ENCODE measurements at regions of chr10 and their contacts with region 1.

Region 1: GRCh38 chr10:122368502-122369256 is 5.8 kb upstream of the PLEKHA1 start:
- DNase-seq: no peak
- H3K4me3 ChIP-seq: no peak overlapping the region
- H3K4me3 Mint-ChIP-seq: peak overlapping the region in 1 of 7 donors; percentile 21
- H3K27ac ChIP-seq: no peak overlapping the region
- H3K27ac Mint-ChIP-seq: no peak overlapping the region
- H3K4me1 ChIP-seq: peaks cover 3% of the 10 kb centered on the region
- H3K4me1 Mint-ChIP-seq: peaks cover 3 to 6% (median 3%) of the 10 kb centered on the region in 3 donors
- H3K27me3 ChIP-seq: no peaks in the 10 kb centered on the region
- H3K27me3 Mint-ChIP-seq: peaks cover 16 to 46% of the 10 kb centered on the region in 2 donors

Region 2: GRCh38 chr10:122258136-122259074 is 110.3 kb before region 1 on chr10:
- CTCF ChIA-PET with region 1: no interaction called
- POLR2A ChIA-PET with region 1: no interaction called
- DNase-seq: no peak
- H3K4me3 ChIP-seq: no peak overlapping the region
- H3K4me3 Mint-ChIP-seq: no peak overlapping the region
- H3K27ac ChIP-seq: no peak overlapping the region
- H3K27ac Mint-ChIP-seq: no peak overlapping the region
- H3K4me1 ChIP-seq: no peaks in the 10 kb centered on the region
- H3K4me1 Mint-ChIP-seq: no peaks in the 10 kb centered on the region
- H3K27me3 ChIP-seq: no peaks in the 10 kb centered on the region
- H3K27me3 Mint-ChIP-seq: peaks cover 18 to 32% of the 10 kb centered on the region in 2 donors

Region 3: DNA sequence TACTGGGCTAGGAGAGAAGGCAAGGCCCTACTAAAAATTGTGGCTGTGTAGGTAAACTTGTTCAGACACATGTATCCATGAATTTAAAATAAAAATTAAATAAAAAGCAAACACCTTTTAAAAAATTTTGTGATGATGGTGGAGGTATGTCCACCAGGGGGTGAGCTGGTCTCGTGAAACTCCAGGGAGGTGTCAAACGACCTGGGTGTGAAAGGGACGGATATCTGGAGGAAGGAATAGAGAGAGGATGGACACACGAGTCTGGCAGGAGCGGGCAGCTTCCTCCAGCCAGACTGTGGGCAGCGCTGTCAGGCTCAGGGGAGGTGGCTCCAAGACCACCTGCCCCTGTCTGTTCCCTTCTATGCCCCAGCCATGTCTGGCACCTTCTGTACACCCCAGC is 157.1 kb after region 1 on chr10:
- CTCF ChIA-PET with region 1: no interaction called
- POLR2A ChIA-PET with region 1: interaction called, 13 read pairs
- DNase-seq: peak in 1 of 5 donors; percentile 15
- H3K4me3 ChIP-seq: no peak overlapping the region
- H3K4me3 Mint-ChIP-seq: no peak overlapping the region
- H3K27ac ChIP-seq: no peak overlapping the region
- H3K27ac Mint-ChIP-seq: peak overlapping the region in 1 of 8 donors; percentile 47
- H3K4me1 ChIP-seq: no peaks in the 10 kb centered on the region
- H3K4me1 Mint-ChIP-seq: peaks cover 4 to 5% (median 4%) of the 10 kb centered on the region in 3 donors
- H3K27me3 ChIP-seq: no peaks in the 10 kb centered on the region
- H3K27me3 Mint-ChIP-seq: peaks cover 0 to 5% of the 10 kb centered on the region in 2 donors